HEK293 (cell line): ENCODE measurements at regions of chr19 and their contacts with region 1.

Region 1: DNA sequence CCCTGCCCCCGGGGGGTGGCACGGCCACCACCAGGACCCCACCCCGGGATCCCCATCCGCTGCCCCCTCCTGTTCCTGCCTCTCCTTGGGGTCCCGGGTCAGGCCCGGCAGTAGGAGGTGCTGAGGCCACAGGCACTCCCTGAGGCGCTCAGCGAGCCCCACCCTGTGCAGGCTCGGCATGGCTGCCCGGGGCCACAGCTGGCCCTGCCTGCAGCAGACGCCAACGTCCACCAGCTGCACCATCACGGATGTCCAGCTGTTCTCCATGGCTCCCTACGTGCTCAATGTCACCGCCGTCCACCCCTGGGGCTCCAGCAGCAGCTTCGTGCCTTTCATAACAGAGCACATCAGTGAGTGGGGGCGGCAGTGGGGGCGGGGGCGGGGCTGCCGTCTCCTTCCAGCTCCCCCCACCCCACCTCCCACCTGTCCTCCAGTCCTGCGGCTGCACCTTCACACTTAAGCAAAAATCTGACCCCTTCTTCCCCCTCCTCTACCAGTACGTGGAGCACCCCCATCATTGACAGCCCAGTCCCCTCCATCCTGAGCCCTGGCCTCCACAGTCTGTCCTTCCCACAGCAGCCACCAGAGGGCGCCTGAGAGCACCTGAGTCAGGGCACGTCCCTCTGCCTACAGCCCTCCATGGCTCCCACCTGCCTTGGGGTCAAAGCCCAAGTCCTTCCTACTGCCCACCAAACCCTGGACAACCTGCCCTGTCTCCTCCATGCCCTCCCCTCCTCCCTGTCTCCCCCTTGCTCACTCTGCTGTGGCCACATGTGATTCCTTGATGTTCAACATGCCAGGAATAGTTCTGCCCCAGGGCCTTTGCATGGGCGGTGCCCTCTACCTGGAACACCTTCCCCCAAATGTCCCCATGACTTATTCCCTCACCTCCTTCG is 3.9 kb downstream of the EBI3 start:
- H3K4me3 ChIP-seq: peak overlapping the region; percentile 23
- H3K27ac ChIP-seq: no peak overlapping the region
- H3K4me1 ChIP-seq: no peaks in the 10 kb centered on the region
- CTCF ChIP-seq: peak; percentile 98

Region 2: GRCh38 chr19:4246767-4247593 is 13.8 kb after region 1 on chr19 and contains the start of gene YJU2:
- CTCF ChIA-PET with region 1: interaction called, 13 read pairs
- POLR2A ChIA-PET with region 1: no interaction called
- H3K4me3 ChIP-seq: peak within 1 kb of the TSS; percentile 83
- H3K27ac ChIP-seq: peak within 1 kb of the TSS; percentile 54
- H3K4me1 ChIP-seq: no peaks in the 10 kb centered on the region; the same call in 1 of the 2 replicates
- CTCF ChIP-seq: peak; percentile 89